ENCODE measurements at regions of chr6 and their contacts with region 1.

Region 1: DNA sequence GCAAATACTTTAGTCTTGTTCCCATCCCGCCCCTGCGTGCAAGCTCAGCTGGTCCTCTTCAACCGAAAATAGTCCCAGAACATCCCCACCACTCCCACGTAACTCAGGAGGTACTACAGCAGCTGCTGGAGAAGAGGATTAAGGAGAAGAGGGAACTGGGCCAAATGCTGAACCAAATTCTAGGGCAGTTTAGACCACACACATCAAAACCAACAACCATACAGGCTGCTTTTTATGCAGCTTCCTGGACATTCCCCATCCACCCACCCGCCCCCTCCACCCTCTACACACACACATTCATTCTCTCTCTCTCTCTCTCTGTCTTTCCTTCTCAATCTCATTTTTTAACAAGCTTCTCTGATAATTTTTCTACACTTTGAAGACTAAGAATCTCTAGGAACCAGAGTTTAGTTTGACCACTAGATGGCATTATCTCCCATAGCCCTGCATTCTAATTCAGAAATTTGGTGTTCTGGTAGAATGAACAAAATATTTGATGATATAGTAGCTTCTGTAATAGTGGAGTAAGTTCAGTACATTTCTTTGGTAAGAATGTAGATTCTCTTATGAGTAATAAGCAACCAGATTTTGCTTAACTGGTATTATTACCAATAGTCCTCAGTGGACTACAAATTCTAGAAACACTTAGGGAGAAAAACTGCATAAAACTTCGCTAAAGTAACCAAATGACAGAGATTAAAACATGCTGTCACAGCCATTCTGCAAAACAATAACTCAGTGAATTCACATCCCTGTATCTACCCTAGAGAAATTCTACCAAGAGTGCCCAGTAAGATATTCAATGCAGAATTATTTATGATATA is 52.1 kb upstream of the BEND6 start:
- DNase-seq: peak; percentile 59
- H3K4me3 ChIP-seq: no peak overlapping the region; the same call in 1 of the 2 replicates
- H3K27ac ChIP-seq: peak overlapping the region; percentile 33
- H3K27me3 ChIP-seq: no peaks in the 10 kb centered on the region
- CTCF ChIP-seq: peak; percentile 77

Region 2: GRCh38 chr6:56890683-56891429 is 12.0 kb before region 1 on chr6:
- CTCF ChIA-PET with region 1: interaction called, 44 read pairs
- POLR2A ChIA-PET with region 1: interaction called, 12 read pairs
- DNase-seq: peak; percentile 89
- H3K4me3 ChIP-seq: no peak overlapping the region
- H3K27ac ChIP-seq: peak overlapping the region; percentile 98
- H3K27me3 ChIP-seq: no peaks in the 10 kb centered on the region
- CTCF ChIP-seq: no peak

Region 3: GRCh38 chr6:56933650-56934049 is 30.8 kb after region 1 on chr6:
- CTCF ChIA-PET with region 1: interaction called, 24 read pairs
- POLR2A ChIA-PET with region 1: no interaction called
- DNase-seq: no peak
- H3K4me3 ChIP-seq: no peak overlapping the region
- H3K27ac ChIP-seq: no peak overlapping the region
- H3K27me3 ChIP-seq: no peaks in the 10 kb centered on the region
- CTCF ChIP-seq: no peak

Region 4: DNA sequence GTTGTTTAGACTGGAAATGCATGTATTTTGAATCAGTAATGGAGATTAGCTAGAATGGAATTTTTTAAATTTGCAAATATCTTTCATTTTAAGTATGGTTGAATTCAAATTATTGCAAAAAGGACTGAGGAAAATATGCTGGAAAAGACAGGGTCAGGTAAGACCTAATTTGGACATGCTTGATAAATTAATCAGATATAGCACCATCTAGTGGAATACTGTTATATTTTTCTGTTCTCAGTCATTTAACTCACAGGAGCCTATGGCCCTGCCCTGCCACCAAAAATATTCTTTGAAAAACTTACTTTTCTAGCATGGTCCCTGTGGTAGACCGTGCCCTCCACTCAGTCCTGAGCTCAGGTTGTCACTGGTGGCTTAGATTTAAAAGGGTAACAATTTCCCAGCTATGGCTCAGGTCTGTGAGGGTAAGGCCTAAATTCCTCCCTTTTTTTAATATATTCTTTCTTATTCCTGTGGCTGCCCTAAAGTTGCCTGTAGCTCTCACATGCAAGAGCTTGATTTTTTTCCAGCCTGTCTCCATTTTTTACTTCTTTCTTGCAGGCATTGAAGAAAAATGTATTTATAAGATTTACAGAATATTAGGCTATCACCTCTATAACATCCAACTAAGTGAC is 118.3 kb after region 1 on chr6:
- CTCF ChIA-PET with region 1: interaction called, 50 read pairs
- POLR2A ChIA-PET with region 1: no interaction called
- DNase-seq: peak; percentile 8
- H3K4me3 ChIP-seq: no peak overlapping the region
- H3K27ac ChIP-seq: no peak overlapping the region
- H3K27me3 ChIP-seq: no peaks in the 10 kb centered on the region
- CTCF ChIP-seq: peak; percentile 50

Region 5: DNA sequence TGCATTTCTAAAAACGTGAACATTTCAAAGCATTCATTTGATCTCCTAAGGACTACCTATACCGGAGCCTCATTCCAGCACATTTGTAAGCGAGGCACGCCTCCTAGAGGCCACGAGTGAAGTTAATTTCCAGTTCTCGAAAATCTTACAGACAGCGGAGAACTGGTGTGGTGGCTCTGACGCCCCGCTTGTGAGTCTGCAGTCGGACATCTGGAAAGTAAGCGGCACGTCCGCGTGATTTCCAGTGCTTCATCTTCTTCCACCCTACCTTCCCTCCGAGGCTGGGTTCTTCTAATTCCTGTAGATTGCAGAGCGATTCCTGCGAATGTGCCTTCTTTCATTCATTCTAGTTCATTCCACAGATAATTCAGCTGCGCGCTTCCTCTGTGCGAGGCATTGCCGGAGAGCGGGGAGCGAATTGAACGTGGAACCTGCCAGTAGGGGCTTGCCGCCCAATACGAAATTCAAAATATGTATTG is 413.8 kb after region 1 on chr6:
- CTCF ChIA-PET with region 1: interaction called, 36 read pairs
- POLR2A ChIA-PET with region 1: no interaction called
- DNase-seq: peak; percentile 85
- H3K4me3 ChIP-seq: peak overlapping the region; percentile 95
- H3K27ac ChIP-seq: peak overlapping the region; percentile 43
- H3K27me3 ChIP-seq: no peaks in the 10 kb centered on the region
- CTCF ChIP-seq: peak; percentile 79